HepG2 (cell line): ENCODE measurements at regions of chr5 and their contacts with region 1.

Region 1: DNA sequence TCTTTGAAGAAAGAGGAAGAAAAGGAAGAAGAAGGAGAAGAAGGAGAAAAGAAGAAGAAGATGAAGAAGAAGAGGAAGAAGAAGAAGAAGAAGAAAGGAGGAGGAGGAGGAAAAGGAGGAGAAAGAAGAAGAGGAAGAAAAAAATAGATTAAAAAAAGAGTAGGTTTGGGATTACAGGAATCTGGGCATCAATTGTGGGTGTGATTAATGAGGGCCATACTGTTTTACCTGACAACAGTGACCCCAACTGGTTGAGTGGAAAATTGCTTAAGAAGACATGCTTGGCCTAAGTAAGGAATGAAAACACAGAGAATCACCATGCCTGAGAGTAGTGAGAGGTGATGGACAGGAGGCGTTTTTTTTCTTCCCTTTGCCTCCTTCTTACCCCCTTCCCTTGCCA is 114.6 kb downstream of the FAM170A start:
- DNase-seq: peak; percentile 33
- ATAC-seq: peak; percentile 82
- H3K4me3 ChIP-seq: no peak overlapping the region
- H3K27ac ChIP-seq: no peak overlapping the region
- H3K4me1 ChIP-seq: no peaks in the 10 kb centered on the region
- H3K27me3 ChIP-seq: no peaks in the 10 kb centered on the region; a peak in 1 of 5 replicates
- CTCF ChIP-seq: peak; percentile 66
- EP300 ChIP-seq: no peak
- POLR2A ChIP-seq: no peak
- RAD21 ChIP-seq: no peak

Region 2: DNA sequence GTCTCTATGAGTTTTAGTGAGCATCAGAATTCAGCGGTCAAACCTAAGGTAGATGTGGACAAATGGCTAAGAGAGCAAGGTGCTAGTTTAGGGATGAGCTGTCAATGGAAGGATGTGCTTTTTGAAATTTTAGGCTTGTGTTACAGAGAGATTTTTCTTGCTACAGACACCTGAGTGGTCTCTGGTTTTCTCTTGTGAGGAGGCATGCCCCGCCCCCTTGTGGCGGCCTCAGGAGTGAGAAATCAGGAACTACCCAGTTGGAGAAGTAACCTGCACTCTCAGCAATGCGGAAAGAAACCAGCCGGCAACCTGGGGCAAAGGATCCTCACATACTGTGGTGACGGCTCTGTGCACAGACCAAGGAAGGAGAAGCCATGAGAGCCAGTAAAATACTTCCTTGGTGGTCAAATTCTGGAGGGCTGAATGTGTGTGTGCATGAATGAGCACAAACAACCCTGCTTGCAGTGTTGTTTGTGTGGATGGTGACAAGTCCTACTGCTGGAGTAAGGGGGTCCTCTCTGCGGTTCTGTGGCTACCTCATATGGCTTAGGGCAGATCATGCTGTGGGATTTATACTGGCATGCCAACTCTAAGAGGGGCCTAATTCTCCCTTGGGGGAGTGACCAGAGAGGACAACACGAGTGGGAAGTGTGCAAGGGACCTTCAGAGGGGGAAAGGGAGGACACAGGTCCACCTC is 308.3 kb before region 1 on chr5:
- CTCF ChIA-PET with region 1: no interaction called
- POLR2A ChIA-PET with region 1: no interaction called
- in situ Hi-C with region 1: no loop called
- intact Hi-C with region 1: loop called (anchors 5 kb)
- DNase-seq: peak; percentile 55
- ATAC-seq: peak; percentile 83
- H3K4me3 ChIP-seq: peak overlapping the region in 2 of 3 experiments; percentile 18 to 34; a peak in 4 of 6 replicates
- H3K27ac ChIP-seq: no peak overlapping the region
- H3K4me1 ChIP-seq: peaks cover 41% of the 10 kb centered on the region
- H3K27me3 ChIP-seq: no peaks in the 10 kb centered on the region; a peak in 1 of 5 replicates
- CTCF ChIP-seq: peak; percentile 82
- EP300 ChIP-seq: no peak
- POLR2A ChIP-seq: no peak
- RAD21 ChIP-seq: no peak; the same call in 1 of the 2 replicates

Region 3: GRCh38 chr5:119452373-119453039 is 291.4 kb before region 1 on chr5 and contains the start of gene HSD17B4:
- CTCF ChIA-PET with region 1: no interaction called
- POLR2A ChIA-PET with region 1: no interaction called
- in situ Hi-C with region 1: loop called (anchors 25 kb)
- intact Hi-C with region 1: no loop called
- DNase-seq: peak; percentile 90
- ATAC-seq: peak; percentile 94
- H3K4me3 ChIP-seq: peak within 1 kb of the TSS; percentile 89 to 98 (median 97)
- H3K27ac ChIP-seq: peak within 1 kb of the TSS; percentile 100
- H3K4me1 ChIP-seq: peaks cover 31% of the 10 kb centered on the region
- H3K27me3 ChIP-seq: no peaks in the 10 kb centered on the region; a peak in 1 of 5 replicates
- CTCF ChIP-seq: no peak; the same call in none of the 2 replicates
- EP300 ChIP-seq: peak; percentile 26 to 93; a peak in 3 of 4 replicates
- POLR2A ChIP-seq: peak; percentile 79 to 85
- RAD21 ChIP-seq: peak; percentile 50
- total RNA-seq, gene HSD17B4: 399 and 508 TPM in 2 replicates

Region 4: GRCh38 chr5:119578937-119579336 is 165.0 kb before region 1 on chr5:
- CTCF ChIA-PET with region 1: interaction called, 3 read pairs
- POLR2A ChIA-PET with region 1: no interaction called
- in situ Hi-C with region 1: no loop called
- intact Hi-C with region 1: loop called (anchors 1 kb)
- DNase-seq: peak; percentile 63
- ATAC-seq: peak; percentile 95
- H3K4me3 ChIP-seq: no peak overlapping the region
- H3K27ac ChIP-seq: no peak overlapping the region
- H3K4me1 ChIP-seq: no peaks in the 10 kb centered on the region
- H3K27me3 ChIP-seq: no peaks in the 10 kb centered on the region; a peak in 1 of 5 replicates
- CTCF ChIP-seq: peak; percentile 36; the same call in 1 of the 2 replicates
- EP300 ChIP-seq: no peak
- POLR2A ChIP-seq: no peak
- RAD21 ChIP-seq: no peak